ENCODE measurements at regions of chr2 and their contacts with region 1.

Region 1: GRCh38 chr2:66587216-66587615 is 152.3 kb downstream of the MEIS1 start:
- DNase-seq: no peak
- H3K4me3 ChIP-seq: no peak overlapping the region
- H3K27ac ChIP-seq: no peak overlapping the region
- H3K4me1 ChIP-seq: no peaks in the 10 kb centered on the region
- H3K27me3 ChIP-seq: peaks cover 10% of the 10 kb centered on the region
- CTCF ChIP-seq: no peak

Region 2: GRCh38 chr2:66686755-66687154 is 99.5 kb after region 1 on chr2:
- intact Hi-C with region 1: loop called (anchors 10 kb)
- DNase-seq: no peak
- H3K4me3 ChIP-seq: no peak overlapping the region
- H3K27ac ChIP-seq: no peak overlapping the region
- H3K4me1 ChIP-seq: no peaks in the 10 kb centered on the region
- H3K27me3 ChIP-seq: no peaks in the 10 kb centered on the region
- CTCF ChIP-seq: no peak

Region 3: GRCh38 chr2:67215214-67216055 is 628.2 kb after region 1 on chr2:
- intact Hi-C with region 1: loop called (anchors 5 kb)
- DNase-seq: peak; percentile 60
- H3K4me3 ChIP-seq: no peak overlapping the region
- H3K27ac ChIP-seq: no peak overlapping the region
- H3K4me1 ChIP-seq: no peaks in the 10 kb centered on the region
- H3K27me3 ChIP-seq: no peaks in the 10 kb centered on the region
- CTCF ChIP-seq: peak; percentile 23

Region 4: GRCh38 chr2:67840460-67841068 is 1253.3 kb after region 1 on chr2:
- intact Hi-C with region 1: loop called (anchors 10 kb)
- DNase-seq: peak; percentile 58
- H3K4me3 ChIP-seq: no peak overlapping the region
- H3K27ac ChIP-seq: no peak overlapping the region
- H3K4me1 ChIP-seq: no peaks in the 10 kb centered on the region
- H3K27me3 ChIP-seq: no peaks in the 10 kb centered on the region
- CTCF ChIP-seq: peak; percentile 72